Motor neuron (in vitro differentiated cells): ENCODE measurements at regions of chr12 and their contacts with region 1.

Region 1: DNA sequence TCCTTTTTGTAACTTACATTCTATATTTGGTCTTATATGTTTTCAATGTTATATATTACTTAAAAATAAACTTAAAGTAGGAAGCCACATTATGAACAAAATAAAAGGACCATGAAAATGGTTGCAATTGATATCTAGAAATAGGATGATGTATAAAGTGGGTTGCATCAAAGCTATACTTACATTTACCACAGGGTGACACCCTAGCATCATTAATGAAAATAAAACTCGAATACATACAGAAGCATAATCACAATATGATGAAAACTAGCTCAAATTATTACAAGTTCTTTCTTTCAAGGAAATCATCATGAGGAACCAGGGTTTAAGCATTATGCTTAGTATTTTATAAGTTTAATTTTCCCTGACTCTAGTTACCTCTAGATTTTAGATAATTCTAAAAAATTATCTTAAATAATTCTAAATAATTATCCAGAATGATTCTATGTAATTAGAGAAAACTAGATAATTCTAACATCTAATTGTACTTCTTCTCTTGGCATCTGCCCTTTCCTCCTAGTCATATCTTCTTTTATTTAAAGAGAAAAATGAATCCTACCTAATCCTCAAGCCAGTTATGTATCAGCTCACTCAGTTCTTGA is 31.2 kb downstream of the TAS2R7 start:
- ATAC-seq: peak in 4 of 8 experiments; percentile 47 to 68 (median 60)
- H3K4me3 ChIP-seq: no peak overlapping the region
- H3K27ac ChIP-seq: no peak overlapping the region
- H3K4me1 ChIP-seq: no peaks in the 10 kb centered on the region

Region 2: DNA sequence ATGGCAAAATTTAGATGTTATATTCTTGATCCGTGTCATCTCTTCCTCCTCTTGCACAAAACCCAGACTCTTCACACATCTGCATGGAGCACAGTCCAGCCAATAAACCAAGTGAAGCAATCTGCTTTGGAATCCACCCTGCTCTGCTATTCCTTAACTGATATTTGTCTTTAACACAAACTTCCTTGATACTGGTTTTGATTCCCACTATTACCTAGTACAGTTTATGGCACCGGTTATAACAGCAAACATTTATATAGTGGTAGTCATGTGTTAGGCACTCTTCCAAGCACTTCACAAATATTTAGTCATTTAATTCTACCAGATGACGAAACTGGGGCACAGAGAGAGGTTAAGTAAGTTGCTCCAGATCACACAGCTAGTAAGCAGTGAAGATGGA is 109.9 kb before region 1 on chr12:
- in situ Hi-C with region 1: no loop called
- ATAC-seq: no peak
- H3K4me3 ChIP-seq: no peak overlapping the region
- H3K27ac ChIP-seq: no peak overlapping the region
- H3K4me1 ChIP-seq: no peaks in the 10 kb centered on the region

Region 3: DNA sequence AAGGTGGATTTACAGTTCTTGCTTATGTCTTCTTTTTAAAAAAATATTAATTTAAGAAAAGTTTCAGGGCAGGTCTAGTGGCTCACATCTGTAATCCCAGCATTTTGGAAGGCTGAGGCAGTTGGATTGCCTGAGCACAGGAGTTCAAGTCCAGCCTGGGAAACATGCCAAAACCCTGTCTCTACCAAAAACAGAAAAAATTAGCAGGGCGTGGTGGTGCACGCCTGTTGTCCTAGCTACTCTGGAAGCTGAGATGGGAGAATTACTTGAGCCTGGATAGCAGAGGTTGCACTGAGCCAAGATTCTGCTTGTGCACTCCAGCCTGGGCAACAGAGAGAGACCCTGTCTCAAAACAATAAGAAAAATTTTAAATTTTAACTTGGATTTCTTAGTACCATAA is 296.3 kb after region 1 on chr12:
- in situ Hi-C with region 1: no loop called
- ATAC-seq: peak in 3 of 8 experiments; percentile 30 to 88 (median 87)
- H3K4me3 ChIP-seq: no peak overlapping the region
- H3K27ac ChIP-seq: no peak overlapping the region
- H3K4me1 ChIP-seq: no peaks in the 10 kb centered on the region

Region 4: GRCh38 chr12:11134305-11134704 is 363.1 kb after region 1 on chr12 and contains the start of gene TAS2R30:
- in situ Hi-C with region 1: no loop called
- ATAC-seq: peak in 3 of 8 experiments; percentile 85 to 96 (median 94)
- H3K4me3 ChIP-seq: no peak within 1 kb of the TSS
- H3K27ac ChIP-seq: no peak within 1 kb of the TSS
- H3K4me1 ChIP-seq: no peaks in the 10 kb centered on the region
- total RNA-seq, gene TAS2R30: 0.96 to 23.4 (median 3.9) TPM

Region 5: GRCh38 chr12:11202811-11203210 is 431.6 kb after region 1 on chr12:
- in situ Hi-C with region 1: loop called in 7 of 9 experiments (anchors 10 to 25 kb)
- ATAC-seq: no peak
- H3K4me3 ChIP-seq: no peak overlapping the region
- H3K27ac ChIP-seq: no peak overlapping the region
- H3K4me1 ChIP-seq: peaks cover 0 to 2% of the 10 kb centered on the region in 2 donors

Region 6: GRCh38 chr12:11486623-11487444 is 715.6 kb after region 1 on chr12:
- in situ Hi-C with region 1: loop called in 8 of 9 experiments (anchors 10 to 25 kb)
- ATAC-seq: peak; percentile 78 to 95 (median 88)
- H3K4me3 ChIP-seq: no peak overlapping the region
- H3K27ac ChIP-seq: no peak overlapping the region
- H3K4me1 ChIP-seq: no peaks in the 10 kb centered on the region

Region 7: DNA sequence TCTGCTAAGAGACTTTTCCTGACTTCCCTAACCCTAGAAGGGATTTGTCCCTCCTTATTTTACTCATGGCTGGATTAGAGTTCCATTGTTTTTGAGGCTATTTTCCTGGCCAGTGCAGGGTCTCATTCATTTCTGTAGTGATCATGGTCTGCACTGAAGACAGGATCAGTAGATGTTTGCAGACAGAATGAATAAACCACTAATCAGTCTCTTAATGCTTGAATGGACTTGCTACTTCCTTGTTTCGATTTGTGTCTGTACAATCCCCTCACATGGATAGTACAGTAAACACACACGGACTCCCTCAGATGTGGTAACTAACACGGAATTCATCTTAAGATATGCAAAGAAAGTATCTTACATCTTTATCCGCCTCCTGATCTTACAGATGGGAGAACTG is 726.8 kb after region 1 on chr12:
- in situ Hi-C with region 1: loop called in 5 of 9 experiments (anchors 10 to 25 kb)
- ATAC-seq: no peak
- H3K4me3 ChIP-seq: no peak overlapping the region
- H3K27ac ChIP-seq: no peak overlapping the region
- H3K4me1 ChIP-seq: peaks cover 0 to 4% of the 10 kb centered on the region in 2 donors